ENCODE measurements at regions of chr2 and their contacts with region 1.

Region 1: GRCh38 chr2:152175458-152176325 is at the start of gene STAM2:
- DNase-seq: peak; percentile 80 to 98
- H3K4me3 ChIP-seq: peak within 1 kb of the TSS; percentile 64 to 95 (median 89)
- H3K27ac ChIP-seq: peak within 1 kb of the TSS; percentile 97
- H3K4me1 ChIP-seq: peaks cover 0 to 4% (median 0%) of the 10 kb centered on the region in 4 experiments; a peak in 1 of 7 replicates
- H3K27me3 ChIP-seq: peaks cover 1 to 3% (median 2%) of the 10 kb centered on the region in 4 experiments; a peak in 3 of 7 replicates
- CTCF ChIP-seq: peak; percentile 89 to 93 (median 89)
- EP300 ChIP-seq: no peak
- POLR2A ChIP-seq: peak in 1 of 2 experiments; percentile 70; a peak in 2 of 3 replicates
- RAD21 ChIP-seq: peak; percentile 95 to 96
- total RNA-seq, gene STAM2: 9.4 and 9.9 TPM in 2 replicates

Region 2: GRCh38 chr2:152036611-152037469 is 138.9 kb before region 1 on chr2:
- CTCF ChIA-PET with region 1: interaction called, 10 read pairs
- POLR2A ChIA-PET with region 1: interaction called, 4 read pairs
- DNase-seq: peak; percentile 41 to 66
- H3K4me3 ChIP-seq: no peak overlapping the region
- H3K27ac ChIP-seq: no peak overlapping the region
- H3K4me1 ChIP-seq: peaks cover 6 to 18% (median 13%) of the 10 kb centered on the region in 4 experiments; a peak in 6 of 7 replicates
- H3K27me3 ChIP-seq: peaks cover 0 to 29% (median 14%) of the 10 kb centered on the region in 4 experiments; a peak in 5 of 7 replicates
- CTCF ChIP-seq: peak; percentile 63 to 89 (median 85)
- EP300 ChIP-seq: no peak
- POLR2A ChIP-seq: no peak
- RAD21 ChIP-seq: peak; percentile 96 to 98

Region 3: DNA sequence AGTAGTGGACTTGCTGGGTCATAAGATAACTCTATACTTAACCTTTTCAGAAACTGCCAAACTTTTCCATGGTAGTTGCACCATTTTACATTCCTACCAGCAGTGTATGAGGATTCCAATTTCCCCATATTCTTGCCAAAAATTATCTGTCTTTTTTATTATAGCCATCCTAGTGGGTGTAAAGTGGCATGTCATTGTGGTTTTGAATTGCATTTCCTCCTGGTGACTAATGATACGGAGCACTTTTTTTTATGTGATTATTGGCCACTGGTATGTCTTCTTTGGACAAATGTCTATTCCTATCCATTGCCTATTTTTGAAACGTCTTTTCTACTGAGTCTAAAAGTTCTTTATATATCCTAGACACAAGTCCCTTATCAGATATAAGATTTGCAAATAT is 121.1 kb before region 1 on chr2:
- CTCF ChIA-PET with region 1: no interaction called
- POLR2A ChIA-PET with region 1: no interaction called
- DNase-seq: no peak
- H3K4me3 ChIP-seq: no peak overlapping the region
- H3K27ac ChIP-seq: no peak overlapping the region
- H3K4me1 ChIP-seq: peaks cover 7 to 17% (median 10%) of the 10 kb centered on the region in 4 experiments; a peak in 6 of 7 replicates
- H3K27me3 ChIP-seq: no peaks in the 10 kb centered on the region
- CTCF ChIP-seq: no peak
- EP300 ChIP-seq: no peak
- POLR2A ChIP-seq: no peak
- RAD21 ChIP-seq: no peak

Region 4: GRCh38 chr2:152189622-152190495 is 14.2 kb after region 1 on chr2:
- CTCF ChIA-PET with region 1: interaction called, 18 read pairs
- POLR2A ChIA-PET with region 1: no interaction called
- DNase-seq: no peak
- H3K4me3 ChIP-seq: no peak overlapping the region
- H3K27ac ChIP-seq: no peak overlapping the region
- H3K4me1 ChIP-seq: no peaks in the 10 kb centered on the region
- H3K27me3 ChIP-seq: peaks cover 3 to 8% (median 4%) of the 10 kb centered on the region in 4 experiments; a peak in 5 of 7 replicates
- CTCF ChIP-seq: peak in 2 of 3 experiments; percentile 44 to 53; a peak in 3 of 4 replicates
- EP300 ChIP-seq: no peak
- POLR2A ChIP-seq: no peak
- RAD21 ChIP-seq: peak; percentile 87 to 90

Measured in H1 (cell line).